HepG2 (cell line): ENCODE measurements at regions of chr18 and their contacts with region 1.

Region 1: GRCh38 chr18:8988261-8988871 is 114.1 kb upstream of the NDUFV2 start:
- DNase-seq: peak; percentile 46
- ATAC-seq: peak; percentile 97
- H3K4me3 ChIP-seq: no peak overlapping the region
- H3K27ac ChIP-seq: no peak overlapping the region
- H3K4me1 ChIP-seq: no peaks in the 10 kb centered on the region
- H3K27me3 ChIP-seq: peaks cover 0 to 9% of the 10 kb centered on the region in 2 experiments; a peak in 1 of 5 replicates
- CTCF ChIP-seq: peak; percentile 91
- EP300 ChIP-seq: no peak
- POLR2A ChIP-seq: no peak
- RAD21 ChIP-seq: peak; percentile 75

Region 2: GRCh38 chr18:8478166-8478967 is 510.0 kb before region 1 on chr18:
- CTCF ChIA-PET with region 1: interaction called, 3 read pairs
- POLR2A ChIA-PET with region 1: no interaction called
- in situ Hi-C with region 1: loop called (anchors 10 kb)
- intact Hi-C with region 1: no loop called
- DNase-seq: peak; percentile 40
- ATAC-seq: peak; percentile 94
- H3K4me3 ChIP-seq: no peak overlapping the region
- H3K27ac ChIP-seq: no peak overlapping the region
- H3K4me1 ChIP-seq: no peaks in the 10 kb centered on the region
- H3K27me3 ChIP-seq: peaks cover 3 to 38% of the 10 kb centered on the region in 2 experiments; a peak in 4 of 5 replicates
- CTCF ChIP-seq: peak; percentile 77
- EP300 ChIP-seq: no peak
- POLR2A ChIP-seq: no peak
- RAD21 ChIP-seq: no peak

Region 3: DNA sequence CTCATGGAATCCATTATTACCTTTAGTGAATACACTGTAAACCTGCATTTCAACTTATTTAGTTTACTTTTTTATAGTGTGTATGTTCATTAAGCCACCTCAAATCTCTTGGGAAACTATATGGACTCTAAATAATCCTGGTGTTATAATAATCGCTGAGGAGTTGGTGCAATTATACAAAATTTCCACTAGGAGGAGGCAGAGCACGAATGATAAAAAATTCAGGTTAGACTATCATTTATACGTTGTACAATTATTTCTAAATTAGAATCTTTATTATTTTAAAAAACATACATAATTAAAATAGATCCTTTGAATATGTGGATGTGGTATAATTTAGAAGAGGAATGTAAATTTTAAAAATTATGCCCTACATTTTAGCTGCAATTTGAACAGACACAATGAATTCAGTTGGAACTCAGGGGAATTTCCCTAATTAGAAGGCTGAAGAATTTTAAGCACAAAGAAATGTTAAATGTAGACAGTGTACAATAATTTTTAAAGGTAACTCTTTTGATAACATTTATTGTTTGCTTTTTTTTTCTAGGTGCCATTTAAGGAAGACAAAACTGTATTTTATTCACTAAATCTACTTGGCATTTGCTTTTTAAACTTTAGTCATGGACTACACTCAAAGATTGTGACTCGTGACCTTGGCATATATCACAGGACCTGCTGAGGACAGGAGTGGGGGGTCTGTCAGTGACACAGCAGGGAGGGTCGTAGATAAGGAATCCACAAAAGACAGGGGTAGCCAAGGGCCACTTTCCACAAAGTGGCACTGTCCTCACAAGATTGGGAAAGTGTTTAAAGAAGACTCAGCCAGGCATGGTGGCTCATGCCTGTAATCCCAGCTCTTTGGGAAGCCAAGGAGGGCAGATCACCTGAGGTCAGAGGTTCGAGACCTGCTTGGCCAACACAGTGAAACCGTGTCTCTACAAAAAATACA is 333.6 kb before region 1 on chr18:
- CTCF ChIA-PET with region 1: interaction called, 12 read pairs
- POLR2A ChIA-PET with region 1: no interaction called
- in situ Hi-C with region 1: loop called (anchors 5 kb)
- intact Hi-C with region 1: loop called (anchors 1 kb)
- DNase-seq: no peak
- ATAC-seq: no peak
- H3K4me3 ChIP-seq: no peak overlapping the region
- H3K27ac ChIP-seq: no peak overlapping the region
- H3K4me1 ChIP-seq: no peaks in the 10 kb centered on the region; the same call in 1 of the 2 replicates
- H3K27me3 ChIP-seq: peaks cover 4 to 25% of the 10 kb centered on the region in 2 experiments; a peak in 4 of 5 replicates
- CTCF ChIP-seq: peak; percentile 58
- EP300 ChIP-seq: no peak
- POLR2A ChIP-seq: no peak
- RAD21 ChIP-seq: no peak

Region 4: GRCh38 chr18:8696749-8697211 is 291.6 kb before region 1 on chr18:
- CTCF ChIA-PET with region 1: interaction called, 14 read pairs
- POLR2A ChIA-PET with region 1: no interaction called
- in situ Hi-C with region 1: no loop called
- intact Hi-C with region 1: loop called (anchors 1 kb)
- DNase-seq: peak; percentile 24
- ATAC-seq: peak; percentile 81
- H3K4me3 ChIP-seq: no peak overlapping the region
- H3K27ac ChIP-seq: no peak overlapping the region
- H3K4me1 ChIP-seq: peaks cover 5% of the 10 kb centered on the region; the same call in 1 of the 2 replicates
- H3K27me3 ChIP-seq: peaks cover 0 to 7% of the 10 kb centered on the region in 2 experiments; a peak in 2 of 5 replicates
- CTCF ChIP-seq: peak; percentile 73
- EP300 ChIP-seq: no peak
- POLR2A ChIP-seq: no peak
- RAD21 ChIP-seq: peak; percentile 45; the same call in 1 of the 2 replicates

Region 5: GRCh38 chr18:8882632-8883408 is 105.5 kb before region 1 on chr18:
- CTCF ChIA-PET with region 1: interaction called, 12 read pairs
- POLR2A ChIA-PET with region 1: no interaction called
- in situ Hi-C with region 1: loop called (anchors 5 kb)
- intact Hi-C with region 1: loop called (anchors 1 kb)
- DNase-seq: peak; percentile 21
- ATAC-seq: peak; percentile 75
- H3K4me3 ChIP-seq: no peak overlapping the region
- H3K27ac ChIP-seq: no peak overlapping the region
- H3K4me1 ChIP-seq: no peaks in the 10 kb centered on the region
- H3K27me3 ChIP-seq: no peaks in the 10 kb centered on the region; a peak in 1 of 5 replicates
- CTCF ChIP-seq: peak; percentile 72
- EP300 ChIP-seq: no peak
- POLR2A ChIP-seq: no peak
- RAD21 ChIP-seq: no peak